H1 (cell line): ENCODE measurements at regions of chr12 and their contacts with region 1.

Region 1: DNA sequence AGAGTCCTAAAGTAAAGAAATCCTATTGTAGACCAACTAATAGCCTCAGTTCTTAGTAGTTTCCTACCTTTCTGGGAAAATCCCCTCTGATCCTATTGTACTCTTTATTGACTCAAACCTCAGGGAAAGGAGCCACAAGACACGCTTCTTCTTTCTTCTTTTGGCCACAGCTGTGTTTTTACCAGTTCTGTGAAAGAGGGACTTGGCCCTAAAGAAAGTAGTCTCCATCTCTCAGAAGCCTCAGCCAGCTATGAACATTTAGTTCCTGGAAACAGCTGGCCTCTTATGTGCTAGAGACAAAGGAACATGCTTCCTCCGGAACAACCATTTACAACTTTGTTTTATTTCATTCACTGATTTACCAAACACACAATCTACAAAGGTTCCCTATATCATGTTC is 66.1 kb upstream of the ARID2 start:
- DNase-seq: no peak
- H3K4me3 ChIP-seq: no peak overlapping the region
- H3K27ac ChIP-seq: no peak overlapping the region
- H3K4me1 ChIP-seq: no peaks in the 10 kb centered on the region
- H3K27me3 ChIP-seq: no peaks in the 10 kb centered on the region
- CTCF ChIP-seq: no peak
- EP300 ChIP-seq: no peak
- POLR2A ChIP-seq: no peak
- RAD21 ChIP-seq: no peak

Region 2: DNA sequence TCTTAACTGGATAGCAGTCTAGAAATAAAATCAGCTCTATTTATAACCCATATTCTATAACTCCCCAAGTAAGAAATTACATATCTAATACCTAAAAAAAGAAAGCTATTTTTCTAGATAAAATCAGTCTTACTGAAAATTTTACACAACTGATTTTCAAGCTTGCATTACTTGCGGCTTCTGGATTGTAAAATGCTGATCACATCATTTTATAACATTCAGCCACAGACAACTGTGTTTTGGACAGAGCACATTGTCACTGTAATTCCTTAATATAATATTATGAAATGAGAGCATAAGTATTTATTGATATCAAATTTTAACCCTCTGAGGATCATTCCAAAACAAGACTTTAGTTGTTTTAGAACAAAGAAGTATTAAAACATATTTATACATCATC is 12.4 kb before region 1 on chr12:
- CTCF ChIA-PET with region 1: interaction called, 11 read pairs
- POLR2A ChIA-PET with region 1: no interaction called
- DNase-seq: no peak
- H3K4me3 ChIP-seq: no peak overlapping the region
- H3K27ac ChIP-seq: no peak overlapping the region
- H3K4me1 ChIP-seq: peaks cover 0 to 2% (median 0%) of the 10 kb centered on the region in 4 experiments; a peak in 1 of 7 replicates
- H3K27me3 ChIP-seq: no peaks in the 10 kb centered on the region
- CTCF ChIP-seq: no peak
- EP300 ChIP-seq: no peak
- POLR2A ChIP-seq: no peak
- RAD21 ChIP-seq: no peak

Region 3: GRCh38 chr12:45745861-45746277 is 82.4 kb after region 1 on chr12:
- CTCF ChIA-PET with region 1: no interaction called
- POLR2A ChIA-PET with region 1: no interaction called
- DNase-seq: no peak
- H3K4me3 ChIP-seq: no peak overlapping the region
- H3K27ac ChIP-seq: no peak overlapping the region
- H3K4me1 ChIP-seq: no peaks in the 10 kb centered on the region
- H3K27me3 ChIP-seq: no peaks in the 10 kb centered on the region
- CTCF ChIP-seq: no peak
- EP300 ChIP-seq: no peak
- POLR2A ChIP-seq: no peak
- RAD21 ChIP-seq: no peak